ENCODE measurements at regions of chr14 and their contacts with region 1.

Region 1: DNA sequence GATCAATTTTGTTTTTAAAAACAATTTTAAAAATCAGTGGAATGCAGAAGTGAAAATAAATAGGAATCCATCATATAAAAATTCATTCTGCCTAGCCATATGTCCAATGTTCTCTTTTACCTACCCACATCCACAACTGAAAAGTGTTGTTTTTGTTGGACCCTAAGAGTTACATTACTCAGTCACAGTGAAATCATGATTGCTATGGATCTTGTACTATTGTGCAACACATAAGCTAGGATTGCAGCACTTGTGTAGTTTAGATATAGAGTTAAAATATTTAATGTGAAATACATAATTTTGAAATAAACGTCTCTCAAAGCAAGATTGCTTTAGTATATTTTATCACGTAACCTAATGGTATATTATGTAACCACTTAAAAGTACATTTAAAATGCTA is 213.3 kb upstream of the CLEC14A start:
- DNase-seq: no peak
- H3K4me3 ChIP-seq: no peak overlapping the region
- H3K27ac ChIP-seq: no peak overlapping the region
- H3K4me1 ChIP-seq: no peaks in the 10 kb centered on the region
- H3K27me3 ChIP-seq: no peaks in the 10 kb centered on the region
- CTCF ChIP-seq: no peak

Region 2: DNA sequence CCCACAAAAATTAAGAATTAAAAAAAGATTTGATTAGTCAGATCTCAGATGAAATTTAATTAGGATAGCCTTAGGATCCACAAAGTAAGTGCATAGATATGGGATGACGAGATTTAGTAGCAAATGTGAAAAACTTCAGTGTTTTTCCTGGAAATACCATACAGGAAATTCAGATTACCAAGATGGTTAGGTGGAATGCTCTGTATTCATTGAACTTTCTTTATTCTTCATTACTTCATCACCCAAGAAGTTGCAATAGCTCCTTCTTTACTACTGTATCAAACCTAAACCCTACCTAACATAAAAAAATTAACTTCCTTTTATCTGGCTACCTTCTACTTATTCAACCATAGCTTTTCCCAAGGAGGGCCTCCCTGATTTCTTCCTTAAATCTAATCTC is 773.3 kb before region 1 on chr14:
- CTCF ChIA-PET with region 1: no interaction called
- POLR2A ChIA-PET with region 1: interaction called, 22 read pairs
- intact Hi-C with region 1: no loop called
- DNase-seq: no peak
- H3K4me3 ChIP-seq: no peak overlapping the region
- H3K27ac ChIP-seq: no peak overlapping the region
- H3K4me1 ChIP-seq: no peaks in the 10 kb centered on the region
- H3K27me3 ChIP-seq: no peaks in the 10 kb centered on the region
- CTCF ChIP-seq: no peak